Heart left ventricle (tissue), 16 donors: ENCODE measurements at regions of chr1 and their contacts with region 1.

Region 1: GRCh38 chr1:31182352-31182751 is 57.3 kb downstream of the NKAIN1 start:
- DNase-seq: peak; percentile 79 to 87 (median 81)
- ATAC-seq: peak; percentile 70 to 94 (median 88)
- H3K4me3 ChIP-seq: peak overlapping the region in 10 of 12 donors; percentile 11 to 42 (median 27)
- H3K27ac ChIP-seq: no peak overlapping the region
- H3K4me1 ChIP-seq: peaks cover 0 to 17% (median 11%) of the 10 kb centered on the region in 12 donors
- H3K27me3 ChIP-seq: peaks cover 0 to 19% (median 3%) of the 10 kb centered on the region in 9 donors
- CTCF ChIP-seq: peak in 6 of 12 donors; percentile 11 to 45 (median 25)
- POLR2A ChIP-seq: no peak

Region 2: DNA sequence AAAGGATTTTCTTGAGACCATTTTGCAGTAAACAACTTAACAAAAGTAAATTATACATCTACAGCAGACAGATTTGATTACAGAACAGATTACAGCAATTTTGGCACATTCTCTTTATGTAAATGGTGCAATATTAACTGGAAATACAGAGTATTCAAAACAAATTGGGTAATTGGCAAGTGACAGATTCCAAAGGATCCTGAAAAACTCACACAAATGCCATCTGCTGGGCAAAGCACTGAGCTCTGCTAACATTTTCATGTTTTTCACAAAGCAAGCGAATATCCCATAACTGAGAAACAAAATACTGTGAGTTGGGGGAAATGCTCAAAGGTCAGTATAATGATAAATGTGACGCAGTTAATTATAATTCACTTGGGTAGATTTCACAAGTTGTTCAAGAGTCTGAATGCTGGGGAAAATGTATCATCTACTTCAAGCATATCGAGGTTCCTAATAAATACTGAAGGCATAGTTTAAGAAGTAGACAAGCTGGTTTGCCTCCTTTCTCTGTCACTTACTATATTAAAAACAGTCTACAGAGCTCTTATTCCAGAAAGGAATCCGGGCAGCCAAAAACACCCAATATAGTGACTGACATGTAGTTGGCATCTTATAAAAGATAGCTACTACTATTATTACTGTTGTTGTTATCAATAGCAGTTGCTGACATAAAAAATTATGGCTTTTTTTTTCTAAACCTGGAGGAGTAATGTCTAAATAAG is 198.0 kb before region 1 on chr1:
- intact Hi-C with region 1: no loop called
- DNase-seq: no peak
- ATAC-seq: no peak
- H3K4me3 ChIP-seq: no peak overlapping the region
- H3K27ac ChIP-seq: peak overlapping the region in 2 of 12 donors; percentile 27 to 85
- H3K4me1 ChIP-seq: peaks cover 0 to 83% (median 45%) of the 10 kb centered on the region in 12 donors
- H3K27me3 ChIP-seq: no peaks in the 10 kb centered on the region
- CTCF ChIP-seq: peak in 1 of 12 donors; percentile 19
- POLR2A ChIP-seq: no peak

Region 3: GRCh38 chr1:31327381-31327780 is 145.0 kb after region 1 on chr1:
- intact Hi-C with region 1: loop called in 5 of 10 experiments (anchors 5 to 10 kb)
- DNase-seq: no peak
- ATAC-seq: no peak
- H3K4me3 ChIP-seq: no peak overlapping the region
- H3K27ac ChIP-seq: no peak overlapping the region
- H3K4me1 ChIP-seq: peaks cover 0 to 13% (median 0%) of the 10 kb centered on the region in 12 donors
- H3K27me3 ChIP-seq: no peaks in the 10 kb centered on the region
- CTCF ChIP-seq: no peak
- POLR2A ChIP-seq: no peak

Region 4: DNA sequence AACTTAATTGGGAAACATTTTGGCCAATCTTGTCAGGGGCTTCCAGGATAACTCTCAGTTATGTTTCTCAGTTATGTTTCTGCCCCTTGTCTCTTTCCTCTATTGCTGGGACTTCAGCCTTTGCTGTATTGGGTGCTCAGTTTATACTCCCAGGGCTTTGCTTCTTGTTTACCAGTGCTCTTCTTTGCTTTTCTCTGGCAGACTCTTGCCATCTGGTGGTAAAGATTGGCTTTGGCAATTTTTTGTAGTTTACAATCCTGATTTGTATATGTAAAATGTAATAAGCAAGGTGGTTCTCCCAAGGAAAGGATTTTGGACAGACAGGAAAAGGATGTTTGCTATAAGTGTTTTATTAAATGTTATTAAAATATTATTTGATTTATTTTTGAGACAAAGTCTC is 152.7 kb after region 1 on chr1:
- intact Hi-C with region 1: loop called in 8 of 10 experiments (anchors 2 to 10 kb)
- DNase-seq: no peak
- ATAC-seq: peak in 1 of 4 donors; percentile 39
- H3K4me3 ChIP-seq: no peak overlapping the region
- H3K27ac ChIP-seq: no peak overlapping the region
- H3K4me1 ChIP-seq: no peaks in the 10 kb centered on the region
- H3K27me3 ChIP-seq: no peaks in the 10 kb centered on the region
- CTCF ChIP-seq: peak; percentile 17 to 59 (median 38)
- POLR2A ChIP-seq: no peak

Region 5: GRCh38 chr1:31348449-31348848 is 166.1 kb after region 1 on chr1:
- intact Hi-C with region 1: loop called in 1 of 10 experiments (anchors 10 kb)
- DNase-seq: no peak
- ATAC-seq: no peak
- H3K4me3 ChIP-seq: no peak overlapping the region
- H3K27ac ChIP-seq: no peak overlapping the region
- H3K4me1 ChIP-seq: no peaks in the 10 kb centered on the region
- H3K27me3 ChIP-seq: no peaks in the 10 kb centered on the region
- CTCF ChIP-seq: no peak
- POLR2A ChIP-seq: no peak

Region 6: GRCh38 chr1:31422505-31423319 is 240.4 kb after region 1 on chr1:
- intact Hi-C with region 1: loop called (anchors 1 to 5 kb)
- DNase-seq: peak; percentile 46 to 75 (median 51)
- ATAC-seq: peak; percentile 56 to 87 (median 74)
- H3K4me3 ChIP-seq: no peak overlapping the region
- H3K27ac ChIP-seq: no peak overlapping the region
- H3K4me1 ChIP-seq: peaks cover 0 to 6% (median 0%) of the 10 kb centered on the region in 12 donors
- H3K27me3 ChIP-seq: peaks cover 0 to 10% (median 0%) of the 10 kb centered on the region in 9 donors
- CTCF ChIP-seq: peak; percentile 87 to 97 (median 91)
- POLR2A ChIP-seq: no peak

Region 7: DNA sequence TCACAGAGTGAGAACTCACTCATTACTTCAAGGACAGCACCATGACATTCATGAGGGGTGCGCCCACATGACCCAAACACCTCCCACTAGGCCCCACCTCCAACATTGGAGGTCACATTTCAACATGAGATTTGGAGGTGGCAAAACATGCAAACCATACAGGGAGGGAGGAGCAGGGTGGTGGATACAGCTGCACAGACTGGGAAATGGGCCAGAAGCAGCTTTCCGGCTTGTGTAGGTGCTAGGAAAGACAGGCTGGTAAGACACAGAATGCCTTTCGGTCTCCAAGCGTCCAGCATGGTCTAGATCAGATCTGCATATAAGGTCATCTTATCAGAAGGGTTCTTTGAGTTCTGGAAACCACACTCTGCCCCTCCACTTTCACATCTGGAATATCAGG is 358.8 kb after region 1 on chr1:
- intact Hi-C with region 1: loop called in 6 of 10 experiments (anchors 5 to 10 kb)
- DNase-seq: no peak
- ATAC-seq: no peak
- H3K4me3 ChIP-seq: no peak overlapping the region
- H3K27ac ChIP-seq: no peak overlapping the region
- H3K4me1 ChIP-seq: no peaks in the 10 kb centered on the region
- H3K27me3 ChIP-seq: no peaks in the 10 kb centered on the region
- CTCF ChIP-seq: no peak
- POLR2A ChIP-seq: no peak

Region 8: GRCh38 chr1:31548907-31549808 is 366.8 kb after region 1 on chr1:
- intact Hi-C with region 1: loop called (anchors 2 to 10 kb)
- DNase-seq: peak; percentile 67 to 80 (median 78)
- ATAC-seq: peak; percentile 85 to 93 (median 91)
- H3K4me3 ChIP-seq: peak overlapping the region in 8 of 12 donors; percentile 7 to 46 (median 34)
- H3K27ac ChIP-seq: peak overlapping the region in 10 of 12 donors; percentile 13 to 67 (median 53)
- H3K4me1 ChIP-seq: peaks cover 0 to 18% (median 8%) of the 10 kb centered on the region in 12 donors
- H3K27me3 ChIP-seq: peaks cover 0 to 5% (median 0%) of the 10 kb centered on the region in 9 donors
- CTCF ChIP-seq: peak; percentile 91 to 97 (median 94)
- POLR2A ChIP-seq: no peak